ENCODE measurements at regions of chr11 and their contacts with region 1.

Region 1: GRCh38 chr11:29190313-29190712 is 826.5 kb downstream of the KCNA4 start:
- DNase-seq: no peak
- ATAC-seq: no peak
- H3K4me3 ChIP-seq: no peak overlapping the region
- H3K4me3 Mint-ChIP-seq: no peak overlapping the region
- H3K27ac ChIP-seq: no peak overlapping the region
- H3K27ac Mint-ChIP-seq: no peak overlapping the region
- H3K4me1 ChIP-seq: no peaks in the 10 kb centered on the region
- H3K4me1 Mint-ChIP-seq: no peaks in the 10 kb centered on the region
- H3K27me3 ChIP-seq: no peaks in the 10 kb centered on the region
- H3K27me3 Mint-ChIP-seq: no peaks in the 10 kb centered on the region
- CTCF ChIP-seq: no peak

Region 2: DNA sequence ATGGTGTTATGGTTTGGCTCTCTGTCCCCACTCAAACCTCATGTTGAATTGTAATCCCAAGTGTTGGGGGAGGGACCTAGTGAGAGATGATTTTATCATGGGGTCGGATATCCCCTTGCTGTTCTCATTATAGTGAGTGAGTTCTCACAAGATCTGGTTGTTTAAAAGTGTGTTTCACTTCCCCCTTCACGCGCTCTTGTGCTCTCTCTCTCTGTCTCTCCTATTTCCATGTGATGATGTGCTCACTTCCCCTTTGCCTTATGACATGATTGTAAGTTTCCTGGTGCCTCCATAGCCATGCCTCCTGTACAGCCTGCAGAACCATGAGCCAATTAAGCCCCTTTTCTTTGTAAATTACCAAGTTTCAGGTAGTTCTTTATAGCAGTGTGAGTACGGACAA is 61.4 kb after region 1 on chr11:
- CTCF ChIA-PET with region 1: no interaction called
- POLR2A ChIA-PET with region 1: no interaction called
- intact Hi-C with region 1: loop called in 1 of 2 experiments (anchors 10 kb)
- DNase-seq: no peak
- ATAC-seq: no peak
- H3K4me3 ChIP-seq: no peak overlapping the region
- H3K4me3 Mint-ChIP-seq: no peak overlapping the region
- H3K27ac ChIP-seq: no peak overlapping the region
- H3K27ac Mint-ChIP-seq: no peak overlapping the region
- H3K4me1 ChIP-seq: no peaks in the 10 kb centered on the region
- H3K4me1 Mint-ChIP-seq: no peaks in the 10 kb centered on the region
- H3K27me3 ChIP-seq: no peaks in the 10 kb centered on the region
- H3K27me3 Mint-ChIP-seq: no peaks in the 10 kb centered on the region
- CTCF ChIP-seq: no peak

Measured in CD4-positive, alpha-beta T cell (primary cell).